HCT116 (cell line): ENCODE measurements at regions of chr1 and their contacts with region 1.

Region 1: GRCh38 chr1:26959722-26960615 is at the start of gene KDF1:
- DNase-seq: peak; percentile 61
- ATAC-seq: peak; percentile 94
- H3K4me3 ChIP-seq: peak within 1 kb of the TSS; percentile 87 to 96
- H3K27ac ChIP-seq: peak within 1 kb of the TSS; percentile 87
- H3K4me1 ChIP-seq: peaks cover 7 to 26% of the 10 kb centered on the region in 2 experiments; a peak in 3 of 4 replicates
- H3K27me3 ChIP-seq: no peaks in the 10 kb centered on the region
- CTCF ChIP-seq: peak in 1 of 3 experiments; percentile 42; a peak in 1 of 6 replicates
- POLR2A ChIP-seq: peak; percentile 38
- RAD21 ChIP-seq: no peak
- total RNA-seq, gene KDF1: 23.0 TPM

Region 2: DNA sequence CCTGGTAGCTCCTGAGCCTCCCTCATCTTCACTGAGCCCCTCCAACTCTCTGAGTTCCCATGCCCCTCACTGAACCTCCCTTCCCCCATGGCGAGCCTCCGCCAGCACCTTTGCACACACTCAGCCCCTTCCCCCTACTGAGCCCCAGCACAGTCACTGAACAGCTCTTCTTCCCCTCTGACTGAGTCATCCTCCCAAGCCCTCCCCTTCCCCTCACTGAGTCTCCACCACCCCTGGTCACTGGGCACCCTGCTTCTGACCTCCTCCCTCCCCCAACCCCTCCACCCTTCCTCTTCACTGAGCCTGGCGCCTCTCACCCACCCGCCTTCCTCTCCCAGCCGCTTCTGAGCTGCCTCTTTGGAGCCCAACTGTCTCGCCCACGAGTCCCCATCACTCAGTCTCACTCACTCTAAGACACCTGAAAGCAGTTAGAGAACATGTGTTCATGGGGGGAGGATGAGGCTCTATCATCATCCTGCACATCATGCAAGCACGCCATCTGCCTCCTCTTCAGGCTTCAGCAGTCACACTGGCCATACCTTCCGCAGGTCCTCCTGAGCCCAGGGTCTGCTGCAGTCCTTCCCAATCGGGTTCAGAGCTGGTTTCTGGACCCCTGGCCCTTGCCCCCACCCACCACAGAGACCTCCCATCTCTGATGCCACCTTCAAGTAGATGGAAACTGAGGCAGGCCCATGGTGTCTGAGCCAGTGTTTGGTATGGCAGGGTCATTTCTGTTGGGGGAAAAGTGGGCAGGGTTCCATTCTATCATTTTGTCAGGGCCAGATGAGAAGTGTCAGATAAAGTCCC is 31.5 kb after region 1 on chr1:
- CTCF ChIA-PET with region 1: interaction called, 3 read pairs
- POLR2A ChIA-PET with region 1: interaction called, 6 read pairs
- RAD21 ChIA-PET with region 1: no interaction called
- intact Hi-C with region 1: loop called (anchors 2 kb)
- DNase-seq: no peak
- ATAC-seq: peak; percentile 29
- H3K4me3 ChIP-seq: peak overlapping the region; percentile 27 to 48
- H3K27ac ChIP-seq: peak overlapping the region; percentile 94
- H3K4me1 ChIP-seq: peaks cover 55 to 73% of the 10 kb centered on the region in 2 experiments
- H3K27me3 ChIP-seq: no peaks in the 10 kb centered on the region
- CTCF ChIP-seq: no peak
- POLR2A ChIP-seq: no peak
- RAD21 ChIP-seq: no peak